Activated T-helper 1 cell treated with anti-CD3 and anti-CD28 coated beads, Interleukin-12 subunit alpha, Interleukin-12 subunit beta, Interleukin-2, Interleukin-4 antibody, amounts not matched to agents 30 ng/mL and 10 ng/mL and 1 ng/mL, durations not matched to agents 14 hours and 24 hours and 36 hours (primary cell): ENCODE measurements at regions of chr14 and their contacts with region 1.

Region 1: DNA sequence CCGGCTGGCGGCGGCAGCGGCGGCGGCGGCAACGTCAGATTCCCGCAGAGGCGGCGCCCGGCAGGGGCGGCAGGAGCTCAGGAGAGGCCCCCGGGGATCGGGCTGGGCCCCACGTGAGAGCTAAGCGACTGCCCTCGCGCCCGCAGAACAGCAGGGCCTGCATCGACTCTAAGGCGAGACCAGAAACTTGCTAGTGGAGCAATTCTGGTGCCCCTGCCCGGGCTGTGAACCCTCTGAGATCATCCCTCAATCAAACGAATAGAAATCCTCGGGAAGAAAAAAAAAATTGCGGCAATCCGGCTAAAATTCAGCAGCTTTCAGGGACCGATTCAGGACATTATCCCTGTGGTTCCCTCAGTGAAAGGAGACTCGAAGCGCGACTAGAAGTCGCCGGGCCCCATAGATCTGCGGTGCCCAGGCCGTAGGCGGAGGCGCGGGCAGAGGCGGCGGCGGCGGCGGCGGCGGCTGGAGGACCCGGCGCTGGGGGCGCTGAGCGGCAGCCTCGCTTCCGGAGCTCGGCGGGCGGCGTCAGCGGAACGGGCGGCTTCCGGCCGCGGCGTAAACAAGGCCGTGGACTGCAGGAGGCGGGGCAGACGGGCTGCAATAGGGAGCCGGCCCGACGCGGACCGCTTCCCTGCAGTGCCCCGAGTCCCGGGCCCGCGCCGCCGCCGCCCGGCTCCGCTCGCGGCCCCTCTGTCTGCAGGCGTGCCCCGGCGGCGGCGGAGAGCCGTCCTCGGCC is at the start of gene KLHDC2:
- DNase-seq: peak; percentile 89
- H3K4me3 Mint-ChIP-seq: peak within 1 kb of the TSS; percentile 99
- H3K27ac Mint-ChIP-seq: peak within 1 kb of the TSS; percentile 100
- H3K4me1 Mint-ChIP-seq: peaks cover 33% of the 10 kb centered on the region
- H3K27me3 Mint-ChIP-seq: peaks cover 2% of the 10 kb centered on the region
- total RNA-seq, gene KLHDC2: 23.7 and 26.2 TPM in 2 replicates

Region 2: GRCh38 chr14:49447540-49448107 is 320.1 kb before region 1 on chr14:
- intact Hi-C with region 1: no loop called
- DNase-seq: no peak
- H3K4me3 Mint-ChIP-seq: no peak overlapping the region
- H3K27ac Mint-ChIP-seq: no peak overlapping the region
- H3K4me1 Mint-ChIP-seq: no peaks in the 10 kb centered on the region
- H3K27me3 Mint-ChIP-seq: peaks cover 13% of the 10 kb centered on the region

Region 3: DNA sequence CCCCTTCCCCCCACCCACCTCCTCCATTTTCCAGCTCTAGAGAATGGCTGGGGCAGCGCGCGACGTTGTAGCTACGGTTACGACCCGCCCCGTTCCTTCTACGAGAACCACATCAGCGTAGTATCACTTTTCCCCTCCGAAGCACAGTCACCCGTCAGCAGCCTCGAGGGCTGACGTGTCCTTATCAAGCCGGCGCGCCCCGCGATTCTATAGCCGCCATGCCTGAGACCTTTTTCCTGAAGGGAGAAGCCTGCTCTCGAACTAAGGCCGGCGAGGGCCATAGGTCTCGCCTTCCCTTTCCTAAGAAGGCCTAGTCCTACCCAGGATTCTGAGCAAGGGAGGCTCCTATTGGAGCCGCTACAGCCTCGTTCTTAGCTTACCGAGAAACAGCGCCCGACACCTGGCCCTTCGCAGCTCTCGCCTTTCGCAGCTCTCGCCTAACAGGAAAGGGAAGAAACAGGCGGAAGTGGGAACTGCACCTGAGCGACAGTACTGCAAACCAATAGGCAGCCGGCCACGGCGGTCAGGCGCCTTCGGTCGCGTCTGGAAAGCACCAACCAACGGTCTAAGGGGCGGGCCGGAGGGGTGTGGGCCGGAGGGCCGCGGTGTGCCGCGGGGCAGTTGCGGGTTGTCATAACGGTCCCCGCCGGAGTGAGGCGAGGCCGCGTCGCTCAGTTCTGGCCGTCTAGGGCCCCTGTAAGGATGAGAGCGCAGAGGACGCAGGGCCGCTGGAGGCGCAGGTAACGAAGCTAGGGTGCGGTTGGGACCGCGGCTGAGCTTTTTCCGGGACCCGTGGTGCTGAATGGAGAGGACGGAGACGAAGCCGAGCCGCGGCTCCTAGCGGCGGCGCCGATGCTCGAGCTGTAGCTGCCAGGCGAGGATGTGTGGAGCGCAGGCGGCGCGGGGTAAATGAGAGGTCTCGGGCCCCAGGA is 147.3 kb before region 1 on chr14 and contains the starts of genes MGAT2 and RPL36AL:
- intact Hi-C with region 1: loop called (anchors 1 kb)
- DNase-seq: peak; percentile 96
- H3K4me3 Mint-ChIP-seq: peak within 1 kb of the TSS; percentile 98
- H3K27ac Mint-ChIP-seq: peak within 1 kb of the TSS; percentile 98
- H3K4me1 Mint-ChIP-seq: peaks cover 53% of the 10 kb centered on the region
- H3K27me3 Mint-ChIP-seq: peaks cover 2% of the 10 kb centered on the region
- total RNA-seq, gene MGAT2: 57.5 and 58.3 TPM in 2 replicates
- total RNA-seq, gene RPL36AL: 224 and 237 TPM in 2 replicates

Region 4: DNA sequence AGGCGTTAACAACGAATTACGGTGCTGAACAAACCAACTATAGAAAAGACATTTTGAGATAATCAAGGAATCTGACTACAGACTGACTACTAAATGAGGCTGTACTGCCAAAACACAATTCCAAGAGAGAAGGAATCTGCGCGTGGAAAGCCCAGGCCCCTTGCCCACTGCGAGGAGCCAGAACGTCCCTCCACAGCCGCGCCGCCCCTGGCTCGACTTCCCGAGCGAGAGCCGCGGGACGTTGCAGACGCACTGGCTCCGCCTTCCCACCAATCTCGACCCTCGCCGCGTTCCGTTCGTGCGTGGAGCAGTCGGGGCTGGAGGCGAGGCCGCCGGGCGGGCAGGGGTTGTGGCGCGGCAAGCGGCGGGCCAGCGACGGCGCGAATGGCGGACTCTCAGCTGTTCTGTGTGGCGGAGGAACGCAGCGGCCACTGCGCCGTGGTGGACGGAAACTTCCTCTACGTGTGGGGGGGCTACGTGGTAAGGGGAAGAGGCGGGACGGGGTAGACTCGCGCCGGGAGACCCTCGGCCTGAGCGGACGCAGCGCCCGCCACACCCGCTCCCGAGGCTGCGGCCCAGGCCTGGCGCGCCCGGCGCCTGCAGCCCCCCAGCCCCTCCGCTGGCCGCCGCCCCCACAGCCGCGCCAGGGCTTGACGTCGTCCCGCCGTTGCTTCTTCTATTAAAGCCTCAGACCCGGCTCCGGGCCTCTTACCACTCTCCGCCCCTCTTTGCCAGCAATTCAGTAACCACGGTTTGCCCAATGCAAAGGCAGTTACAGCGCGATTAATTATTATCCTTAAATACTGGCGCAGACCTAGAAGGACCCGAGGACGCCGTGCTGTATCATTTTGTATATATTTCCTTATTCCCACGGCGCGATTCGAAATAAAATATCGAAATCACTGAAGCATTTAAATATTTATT is 74.7 kb before region 1 on chr14 and contains the start of gene KLHDC1:
- intact Hi-C with region 1: loop called (anchors 1 kb)
- DNase-seq: peak; percentile 74
- H3K4me3 Mint-ChIP-seq: peak within 1 kb of the TSS; percentile 87
- H3K27ac Mint-ChIP-seq: peak within 1 kb of the TSS; percentile 94
- H3K4me1 Mint-ChIP-seq: peaks cover 19% of the 10 kb centered on the region
- H3K27me3 Mint-ChIP-seq: peaks cover 1% of the 10 kb centered on the region
- total RNA-seq, gene KLHDC1: 0.93 and 1.9 TPM in 2 replicates

Region 5: DNA sequence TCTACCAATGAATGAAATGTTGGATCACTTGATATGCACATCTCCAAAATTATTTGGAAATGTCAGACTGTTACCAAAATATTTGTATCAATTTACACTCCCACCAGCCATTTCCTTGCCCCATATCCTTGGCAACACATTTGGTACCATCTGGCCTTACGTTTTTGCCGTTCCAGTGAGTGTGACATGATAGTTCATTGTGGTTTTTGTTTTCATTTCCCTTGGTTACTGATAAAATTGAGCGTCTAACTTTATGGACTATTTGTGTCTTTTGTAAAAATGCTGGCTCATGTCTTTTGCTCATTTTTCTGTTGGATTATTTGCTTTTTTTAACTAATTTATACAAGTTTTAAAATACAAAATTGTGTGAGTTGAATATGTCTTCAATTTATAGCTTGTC is 63.8 kb before region 1 on chr14:
- intact Hi-C with region 1: no loop called
- DNase-seq: no peak
- H3K4me3 Mint-ChIP-seq: no peak overlapping the region
- H3K27ac Mint-ChIP-seq: no peak overlapping the region
- H3K4me1 Mint-ChIP-seq: no peaks in the 10 kb centered on the region
- H3K27me3 Mint-ChIP-seq: no peaks in the 10 kb centered on the region

Region 6: DNA sequence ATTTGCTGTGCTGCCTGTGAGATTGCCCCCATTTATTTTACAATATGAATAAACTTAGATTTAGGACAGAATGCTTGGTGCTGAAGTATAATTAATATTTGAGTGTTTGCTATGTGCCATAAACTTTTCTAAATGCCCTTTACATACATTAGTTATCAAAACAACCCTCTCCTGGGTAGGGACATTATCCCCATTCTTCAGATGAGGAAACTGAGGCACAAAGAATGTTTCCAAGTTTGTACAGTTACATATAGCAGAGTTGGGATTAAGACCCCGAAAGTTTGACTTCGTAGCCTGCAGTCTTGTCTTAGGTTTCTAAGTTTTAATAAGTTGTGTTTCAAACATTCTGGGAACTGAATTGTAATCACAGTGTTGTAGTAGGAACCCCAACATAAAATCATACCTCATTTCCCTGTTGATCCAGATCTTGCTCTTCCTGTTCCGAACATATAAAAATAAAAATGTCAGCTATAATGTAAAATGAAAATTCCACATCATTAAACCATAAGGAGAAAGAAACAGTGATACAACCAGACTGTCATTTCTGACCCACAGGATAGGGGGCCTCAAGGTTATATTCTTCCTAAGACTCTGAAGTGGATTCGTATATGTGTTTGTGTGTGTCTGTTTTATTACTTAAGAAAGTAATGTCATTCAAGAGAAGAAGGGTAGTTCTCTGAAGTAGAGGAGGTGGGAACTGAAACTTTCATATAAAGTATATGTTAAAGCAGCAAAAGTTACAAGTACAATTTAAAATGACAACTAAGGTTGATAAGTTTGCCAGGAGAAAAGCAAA is 18.8 kb after region 1 on chr14:
- intact Hi-C with region 1: loop called (anchors 2 kb)
- DNase-seq: no peak
- H3K4me3 Mint-ChIP-seq: no peak overlapping the region
- H3K27ac Mint-ChIP-seq: no peak overlapping the region
- H3K4me1 Mint-ChIP-seq: no peaks in the 10 kb centered on the region
- H3K27me3 Mint-ChIP-seq: no peaks in the 10 kb centered on the region

Region 7: GRCh38 chr14:49808780-49809179 is 41.0 kb after region 1 on chr14:
- intact Hi-C with region 1: no loop called
- DNase-seq: no peak
- H3K4me3 Mint-ChIP-seq: no peak overlapping the region
- H3K27ac Mint-ChIP-seq: no peak overlapping the region
- H3K4me1 Mint-ChIP-seq: no peaks in the 10 kb centered on the region
- H3K27me3 Mint-ChIP-seq: no peaks in the 10 kb centered on the region

Region 8: DNA sequence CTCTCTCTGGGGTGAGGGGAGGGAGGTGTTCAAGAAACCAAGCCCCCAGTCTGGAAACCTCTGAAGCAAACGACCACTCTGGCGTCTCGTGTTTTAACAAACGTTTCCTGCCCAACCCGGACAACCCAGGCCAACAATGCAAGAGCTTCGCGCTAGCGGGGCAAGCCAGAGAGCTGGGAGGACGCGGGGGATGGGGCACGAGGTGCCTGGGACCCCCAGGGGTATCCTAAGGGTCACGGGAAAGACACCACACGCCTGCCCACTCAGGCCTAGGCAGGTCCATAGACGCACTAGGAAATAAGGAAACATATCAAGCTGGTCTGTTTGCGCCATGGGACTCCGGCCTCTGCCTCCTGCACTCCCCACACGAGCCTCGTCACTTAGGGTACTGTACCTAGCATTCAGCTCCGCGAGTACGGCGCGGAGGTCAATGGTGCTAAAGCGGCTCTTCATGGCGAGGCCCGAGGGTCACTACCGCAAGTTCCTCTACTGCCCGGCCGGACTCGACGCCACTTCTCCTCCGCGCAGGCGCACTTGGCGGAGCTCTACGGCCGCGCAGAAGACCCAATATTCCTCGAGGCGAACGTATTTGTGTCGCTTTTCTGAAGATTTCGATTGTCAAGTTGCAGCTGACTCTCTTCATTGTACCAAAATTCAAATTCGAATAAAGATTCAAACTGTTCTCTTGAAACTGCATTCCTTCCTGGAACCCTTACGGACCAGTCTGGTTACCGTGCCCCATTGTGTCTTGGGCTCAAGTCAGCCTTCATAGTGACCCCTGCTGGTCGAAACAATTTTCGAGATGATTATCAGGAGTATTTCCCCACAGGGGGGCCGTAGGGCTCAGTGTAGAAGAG is 84.8 kb after region 1 on chr14 and contains the start of gene NEMF:
- intact Hi-C with region 1: loop called (anchors 2 kb)
- DNase-seq: peak; percentile 78
- H3K4me3 Mint-ChIP-seq: peak within 1 kb of the TSS; percentile 96
- H3K27ac Mint-ChIP-seq: peak within 1 kb of the TSS; percentile 97
- H3K4me1 Mint-ChIP-seq: peaks cover 50% of the 10 kb centered on the region
- H3K27me3 Mint-ChIP-seq: no peaks in the 10 kb centered on the region
- total RNA-seq, gene NEMF: 79.9 and 89.3 TPM in 2 replicates